BJ (cell line): ENCODE measurements at regions of chr5 and their contacts with region 1.

Region 1: GRCh38 chr5:33969572-33970452 is 14.7 kb downstream of the SLC45A2 start:
- DNase-seq: no peak
- H3K4me3 ChIP-seq: no peak overlapping the region
- H3K27me3 ChIP-seq: peaks cover 4% of the 10 kb centered on the region; the same call in 1 of the 2 replicates
- CTCF ChIP-seq: peak; percentile 84

Region 2: DNA sequence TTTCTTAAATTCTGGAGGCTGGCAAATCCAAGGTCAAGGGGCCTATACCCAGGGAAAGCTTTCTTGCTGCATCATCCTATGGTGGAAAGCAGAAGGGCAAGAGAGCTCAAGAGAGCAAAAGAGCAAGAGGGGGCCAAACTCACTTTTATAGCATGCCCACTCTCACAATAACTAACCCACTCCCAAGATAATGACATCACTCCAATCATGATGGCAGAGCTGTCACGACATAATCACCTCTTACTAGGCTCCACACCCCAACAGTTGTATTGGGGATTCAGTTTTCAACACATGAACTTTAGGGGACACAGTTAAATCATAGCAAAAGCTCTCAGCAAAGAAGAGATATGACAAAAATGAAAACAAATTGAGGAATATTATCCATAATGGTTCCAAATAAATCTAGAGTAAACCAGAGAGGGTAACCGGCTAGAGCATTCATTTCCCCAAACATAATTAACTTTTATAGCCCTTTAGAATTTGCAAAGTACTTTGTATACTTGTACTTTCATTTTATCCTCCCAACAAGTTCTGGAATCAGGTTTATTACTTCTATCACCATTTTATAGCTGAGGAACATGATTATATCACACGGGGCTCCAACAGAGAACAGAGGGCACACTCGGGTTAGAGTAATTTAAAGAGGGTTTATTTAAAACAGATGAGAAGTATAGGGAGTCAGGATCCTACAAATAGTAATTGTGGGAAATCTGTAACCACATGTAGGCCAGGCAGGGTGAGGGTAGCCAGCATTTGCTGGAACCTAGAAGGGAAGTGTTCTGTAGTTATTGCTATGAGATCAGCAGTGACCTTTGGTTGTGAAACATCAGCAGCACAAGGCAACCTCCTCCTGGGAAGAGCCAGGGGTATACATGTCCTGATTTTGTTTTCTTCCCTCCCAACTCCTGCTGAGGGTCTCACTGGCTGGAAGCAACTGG is 536.2 kb before region 1 on chr5:
- CTCF ChIA-PET with region 1: interaction called, 83 read pairs
- POLR2A ChIA-PET with region 1: no interaction called
- DNase-seq: no peak
- H3K4me3 ChIP-seq: no peak overlapping the region
- H3K27me3 ChIP-seq: no peaks in the 10 kb centered on the region
- CTCF ChIP-seq: no peak

Region 3: DNA sequence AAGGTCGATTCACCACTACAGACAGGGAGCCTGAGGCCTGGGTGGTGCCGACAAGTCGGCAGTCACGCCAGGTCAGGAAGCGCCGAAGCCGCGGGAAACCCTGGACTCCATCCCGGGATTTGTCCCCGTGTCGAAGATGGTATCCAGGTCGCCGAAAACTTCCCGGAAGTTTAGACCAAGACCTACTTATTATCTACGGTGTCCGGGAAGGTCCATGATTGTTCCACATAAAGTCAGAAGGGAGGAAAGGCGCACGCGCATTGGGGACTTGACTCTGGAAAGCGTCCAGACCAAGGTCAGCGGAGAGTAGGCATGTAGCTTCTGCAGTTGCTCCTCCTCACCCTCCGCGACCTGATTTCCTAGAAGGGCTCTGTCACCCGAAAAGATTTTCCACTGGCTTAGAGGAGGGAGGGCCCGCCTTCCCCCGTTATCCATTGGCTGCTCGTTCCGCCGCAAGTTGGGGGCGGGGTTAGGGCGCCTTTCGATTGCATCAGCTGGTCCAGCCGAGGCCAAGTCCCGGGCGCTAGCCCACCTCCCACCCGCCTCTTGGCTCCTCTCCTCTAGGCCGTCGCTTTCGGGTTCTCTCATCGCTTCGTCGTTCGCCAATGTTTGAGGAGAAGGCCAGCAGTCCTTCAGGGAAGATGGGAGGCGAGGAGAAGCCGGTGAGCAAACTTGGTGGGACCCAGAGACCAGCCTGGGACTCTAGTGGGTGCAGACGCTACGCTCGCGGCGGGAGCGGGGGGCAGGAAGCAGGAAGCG is 529.2 kb before region 1 on chr5 and contains the start of gene TARS1:
- CTCF ChIA-PET with region 1: interaction called, 83 read pairs
- POLR2A ChIA-PET with region 1: interaction called, 4 read pairs
- DNase-seq: peak; percentile 100
- H3K4me3 ChIP-seq: peak within 1 kb of the TSS; percentile 76
- H3K27me3 ChIP-seq: no peaks in the 10 kb centered on the region
- CTCF ChIP-seq: no peak
- polyA plus RNA-seq, gene TARS1: 121 and 228 TPM in 2 replicates

Region 4: GRCh38 chr5:33905381-33905780 is 64.4 kb before region 1 on chr5:
- CTCF ChIA-PET with region 1: no interaction called
- POLR2A ChIA-PET with region 1: no interaction called
- DNase-seq: no peak
- H3K4me3 ChIP-seq: no peak overlapping the region
- H3K27me3 ChIP-seq: peaks cover 2% of the 10 kb centered on the region; the same call in 1 of the 2 replicates
- CTCF ChIP-seq: no peak

Region 5: DNA sequence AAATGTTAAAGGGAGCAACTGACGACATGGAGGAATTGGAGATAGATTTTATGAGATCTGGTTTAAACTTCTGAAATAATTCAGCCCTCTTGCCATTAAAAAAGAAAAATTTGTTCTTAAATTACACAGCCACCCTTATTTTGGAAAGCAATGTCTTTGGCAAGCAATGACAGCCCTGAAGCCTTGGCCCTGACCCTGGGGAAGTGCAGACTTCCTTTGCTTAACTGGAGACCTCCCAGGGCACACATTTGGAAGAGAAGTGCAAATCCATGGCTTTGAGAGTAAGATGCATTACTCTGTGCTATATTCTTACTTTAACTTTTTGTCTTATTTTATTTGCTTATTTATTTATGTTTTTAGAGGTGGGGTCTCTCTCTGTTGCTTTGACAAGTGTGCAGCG is 11.6 kb before region 1 on chr5:
- CTCF ChIA-PET with region 1: interaction called, 24 read pairs
- POLR2A ChIA-PET with region 1: no interaction called
- DNase-seq: no peak
- H3K4me3 ChIP-seq: no peak overlapping the region
- H3K27me3 ChIP-seq: peaks cover 8% of the 10 kb centered on the region
- CTCF ChIP-seq: no peak

Region 6: DNA sequence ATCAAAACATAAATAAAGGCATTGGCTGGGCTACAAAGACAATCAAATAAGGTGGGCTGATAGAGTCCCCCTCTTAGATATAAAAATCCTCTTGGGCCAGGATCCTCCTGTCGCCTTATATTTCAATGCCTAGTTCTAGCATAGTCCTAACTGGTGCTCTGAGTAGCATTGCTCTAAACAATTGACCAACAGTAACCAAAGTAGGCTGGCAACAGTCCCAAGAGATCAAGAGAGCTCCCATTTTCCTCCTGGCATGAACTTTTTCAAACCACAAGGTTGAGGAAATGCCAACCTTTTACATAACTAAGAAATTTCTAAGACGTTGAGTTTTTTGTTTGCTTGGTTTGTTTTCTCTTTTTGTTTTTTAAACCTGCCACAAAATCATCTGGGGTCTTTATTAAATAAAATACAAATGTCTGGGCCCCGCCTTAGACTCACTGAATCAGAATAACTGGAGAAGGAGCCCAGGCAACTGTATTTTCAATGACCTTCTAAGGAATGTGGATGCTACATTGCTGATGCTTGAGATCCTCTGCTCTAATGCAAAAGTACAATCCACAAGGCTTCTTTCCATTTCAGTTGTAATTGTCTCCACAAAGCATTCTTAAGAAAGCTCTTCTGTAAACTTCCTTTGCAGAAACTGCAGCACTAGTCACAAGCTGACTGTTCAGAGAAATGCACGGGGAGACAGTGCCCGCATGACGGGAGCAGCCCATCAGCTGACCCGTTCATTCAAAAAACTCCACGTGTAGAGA is 11.8 kb after region 1 on chr5:
- CTCF ChIA-PET with region 1: interaction called, 24 read pairs
- POLR2A ChIA-PET with region 1: no interaction called
- DNase-seq: no peak
- H3K4me3 ChIP-seq: no peak overlapping the region
- H3K27me3 ChIP-seq: no peaks in the 10 kb centered on the region; the same call in 1 of the 2 replicates
- CTCF ChIP-seq: no peak

Region 7: GRCh38 chr5:33997331-33997983 is 27.6 kb after region 1 on chr5:
- CTCF ChIA-PET with region 1: interaction called, 13 read pairs
- POLR2A ChIA-PET with region 1: no interaction called
- DNase-seq: peak; percentile 73
- H3K4me3 ChIP-seq: no peak overlapping the region
- H3K27me3 ChIP-seq: no peaks in the 10 kb centered on the region
- CTCF ChIP-seq: peak; percentile 78